Gastrocnemius medialis (tissue), 4 donors: ENCODE measurements at regions of chr2 and their contacts with region 1.

Region 1: DNA sequence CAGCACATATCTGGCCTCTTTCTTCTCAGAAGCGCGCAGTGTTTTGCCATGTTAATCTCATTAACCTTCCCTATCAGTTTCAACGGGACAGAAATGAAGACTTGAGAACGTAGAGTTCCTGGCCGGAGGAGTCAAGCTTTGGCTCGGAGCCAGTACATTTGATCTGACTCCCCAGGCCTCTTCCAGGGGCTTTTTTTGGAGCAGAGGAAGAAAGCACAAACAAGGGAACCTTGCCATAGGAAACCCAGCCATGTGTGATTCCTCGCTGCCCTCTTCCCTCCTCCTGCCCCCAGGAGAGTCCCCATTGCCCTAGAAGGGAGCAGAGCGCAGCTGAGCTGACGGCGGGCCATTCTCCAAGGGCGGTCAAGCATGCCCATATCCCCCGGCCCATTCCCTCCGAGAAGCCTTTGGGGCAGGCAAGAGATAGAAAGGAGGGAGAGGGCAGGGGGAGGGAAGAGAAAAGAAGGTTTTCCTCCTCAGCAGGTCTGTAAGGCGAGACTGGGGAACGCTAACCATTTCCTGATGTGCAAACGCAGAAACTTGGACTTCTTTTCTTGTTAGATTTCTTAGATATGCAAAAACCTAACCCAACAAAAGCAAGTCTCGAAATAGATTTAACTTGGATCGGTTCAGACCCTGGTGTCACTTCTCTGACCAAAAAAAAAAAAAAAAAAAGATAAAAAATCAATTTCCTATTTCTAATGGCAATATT is 63.7 kb upstream of the POU3F3 start:
- DNase-seq: peak; percentile 67 to 73
- ATAC-seq: peak; percentile 88 to 90
- H3K4me3 ChIP-seq: peak overlapping the region; percentile 41 to 58 (median 44)
- H3K27ac ChIP-seq: peak overlapping the region; percentile 51 to 72 (median 66)
- H3K4me1 ChIP-seq: peaks cover 12 to 24% of the 10 kb centered on the region in 2 donors
- H3K27me3 ChIP-seq: no peaks in the 10 kb centered on the region
- CTCF ChIP-seq: no peak
- POLR2A ChIP-seq: no peak

Region 2: GRCh38 chr2:104862058-104862941 is 72.0 kb after region 1 on chr2:
- in situ Hi-C with region 1: no loop called
- intact Hi-C with region 1: loop called (anchors 5 kb)
- DNase-seq: no peak
- ATAC-seq: no peak
- H3K4me3 ChIP-seq: no peak overlapping the region
- H3K27ac ChIP-seq: no peak overlapping the region
- H3K4me1 ChIP-seq: peaks cover 10 to 11% of the 10 kb centered on the region in 2 donors
- H3K27me3 ChIP-seq: peaks cover 94 to 100% (median 98%) of the 10 kb centered on the region in 3 donors
- CTCF ChIP-seq: no peak
- POLR2A ChIP-seq: no peak